ENCODE measurements at regions of chr4 and their contacts with region 1.

Region 1: DNA sequence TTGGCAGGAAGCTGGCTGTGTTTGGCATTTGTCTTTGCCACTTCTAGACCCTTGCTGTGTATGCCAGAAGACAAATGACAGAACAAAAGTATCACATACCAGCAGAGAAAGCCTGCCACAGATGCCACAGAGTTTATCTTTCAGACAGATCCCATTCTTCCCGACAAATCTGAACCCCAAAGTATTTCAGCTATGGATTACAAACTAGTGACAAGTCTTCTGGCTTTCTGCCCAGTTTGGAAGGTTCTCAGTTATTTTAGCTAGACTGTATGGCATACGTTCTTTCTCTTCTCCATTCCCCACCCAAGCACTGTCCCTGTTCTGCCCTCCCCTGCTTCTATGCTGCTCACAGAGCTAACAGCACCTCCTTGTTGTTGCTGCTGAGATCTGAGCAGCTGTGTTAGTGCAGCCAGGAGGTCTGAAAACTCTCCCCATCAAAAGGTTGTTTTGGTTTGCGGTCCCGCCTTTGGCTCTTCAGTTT is 236.7 kb downstream of the FRAS1 start:
- DNase-seq: peak; percentile 11
- H3K4me3 Mint-ChIP-seq: no peak overlapping the region
- H3K27ac Mint-ChIP-seq: no peak overlapping the region
- H3K4me1 Mint-ChIP-seq: peaks cover 34% of the 10 kb centered on the region
- H3K27me3 Mint-ChIP-seq: no peaks in the 10 kb centered on the region
- CTCF ChIP-seq: no peak

Region 2: GRCh38 chr4:78079726-78080430 is 214.0 kb before region 1 on chr4:
- CTCF ChIA-PET with region 1: no interaction called
- intact Hi-C with region 1: no loop called
- DNase-seq: no peak
- H3K4me3 Mint-ChIP-seq: no peak overlapping the region
- H3K27ac Mint-ChIP-seq: no peak overlapping the region
- H3K4me1 Mint-ChIP-seq: no peaks in the 10 kb centered on the region
- H3K27me3 Mint-ChIP-seq: no peaks in the 10 kb centered on the region
- CTCF ChIP-seq: no peak

Region 3: GRCh38 chr4:78166637-78167036 is 127.2 kb before region 1 on chr4:
- CTCF ChIA-PET with region 1: no interaction called
- intact Hi-C with region 1: loop called (anchors 10 kb)
- DNase-seq: no peak
- H3K4me3 Mint-ChIP-seq: no peak overlapping the region
- H3K27ac Mint-ChIP-seq: no peak overlapping the region
- H3K4me1 Mint-ChIP-seq: no peaks in the 10 kb centered on the region
- H3K27me3 Mint-ChIP-seq: no peaks in the 10 kb centered on the region
- CTCF ChIP-seq: no peak

Region 4: GRCh38 chr4:78250500-78250899 is 43.4 kb before region 1 on chr4:
- CTCF ChIA-PET with region 1: no interaction called
- intact Hi-C with region 1: loop called (anchors 5 kb)
- DNase-seq: no peak
- H3K4me3 Mint-ChIP-seq: no peak overlapping the region
- H3K27ac Mint-ChIP-seq: no peak overlapping the region
- H3K4me1 Mint-ChIP-seq: no peaks in the 10 kb centered on the region
- H3K27me3 Mint-ChIP-seq: no peaks in the 10 kb centered on the region
- CTCF ChIP-seq: no peak